H1 (cell line): ENCODE measurements at regions of chr1 and their contacts with region 1.

Region 1: DNA sequence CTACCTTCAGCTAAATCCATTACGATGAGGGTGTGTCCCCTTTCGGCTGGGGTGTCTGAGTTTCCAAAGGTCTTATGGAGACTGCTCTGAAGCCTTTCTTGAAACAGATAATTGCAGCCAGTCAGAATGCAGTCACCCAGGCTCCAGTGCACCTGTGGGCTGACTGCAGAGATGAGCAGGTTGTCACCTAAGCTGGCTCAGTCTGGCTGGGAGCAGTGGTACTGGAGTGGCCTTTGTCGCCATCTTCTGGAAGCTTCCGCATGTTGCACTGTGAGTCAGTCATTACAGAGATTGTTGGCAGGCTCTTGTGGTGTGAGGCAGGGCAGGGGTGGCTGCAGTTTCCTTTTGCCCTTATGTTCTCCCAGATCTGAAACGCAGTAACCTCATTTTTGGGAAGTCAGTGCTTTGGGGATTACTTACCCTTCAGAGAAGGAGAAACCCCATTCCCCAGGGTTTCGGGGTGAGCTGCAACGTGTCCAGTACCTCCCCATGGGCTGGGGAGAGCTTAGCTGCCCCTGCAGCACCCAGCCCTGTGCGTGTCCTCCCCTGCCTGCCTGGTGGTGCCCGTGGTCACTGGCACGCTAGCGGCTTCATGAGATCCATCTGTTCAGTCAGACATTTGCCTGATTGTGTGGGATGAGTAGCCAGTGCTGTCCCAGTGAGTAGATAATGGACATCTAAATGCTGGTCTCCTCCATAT is 48.0 kb downstream of the SMYD2 start:
- DNase-seq: peak; percentile 75 to 87
- H3K4me3 ChIP-seq: no peak overlapping the region
- H3K27ac ChIP-seq: no peak overlapping the region
- H3K4me1 ChIP-seq: no peaks in the 10 kb centered on the region; a peak in 2 of 7 replicates
- H3K27me3 ChIP-seq: no peaks in the 10 kb centered on the region
- CTCF ChIP-seq: peak; percentile 91 to 97 (median 96)
- EP300 ChIP-seq: peak in 1 of 2 experiments; percentile 8; a peak in 1 of 3 replicates
- POLR2A ChIP-seq: no peak
- RAD21 ChIP-seq: peak; percentile 100

Region 2: GRCh38 chr1:214076708-214077065 is 252.2 kb before region 1 on chr1:
- CTCF ChIA-PET with region 1: no interaction called
- POLR2A ChIA-PET with region 1: no interaction called
- DNase-seq: no peak
- H3K4me3 ChIP-seq: no peak overlapping the region
- H3K27ac ChIP-seq: no peak overlapping the region
- H3K4me1 ChIP-seq: peaks cover 0 to 9% (median 0%) of the 10 kb centered on the region in 4 experiments; a peak in 2 of 7 replicates
- H3K27me3 ChIP-seq: no peaks in the 10 kb centered on the region
- CTCF ChIP-seq: no peak
- EP300 ChIP-seq: no peak
- POLR2A ChIP-seq: no peak
- RAD21 ChIP-seq: no peak

Region 3: GRCh38 chr1:214234635-214235025 is 94.3 kb before region 1 on chr1:
- CTCF ChIA-PET with region 1: interaction called, 105 read pairs
- POLR2A ChIA-PET with region 1: no interaction called
- DNase-seq: no peak
- H3K4me3 ChIP-seq: no peak overlapping the region
- H3K27ac ChIP-seq: no peak overlapping the region
- H3K4me1 ChIP-seq: no peaks in the 10 kb centered on the region
- H3K27me3 ChIP-seq: peaks cover 0 to 1% (median 0%) of the 10 kb centered on the region in 4 experiments; a peak in 1 of 7 replicates
- CTCF ChIP-seq: no peak
- EP300 ChIP-seq: no peak
- POLR2A ChIP-seq: no peak
- RAD21 ChIP-seq: no peak

Region 4: DNA sequence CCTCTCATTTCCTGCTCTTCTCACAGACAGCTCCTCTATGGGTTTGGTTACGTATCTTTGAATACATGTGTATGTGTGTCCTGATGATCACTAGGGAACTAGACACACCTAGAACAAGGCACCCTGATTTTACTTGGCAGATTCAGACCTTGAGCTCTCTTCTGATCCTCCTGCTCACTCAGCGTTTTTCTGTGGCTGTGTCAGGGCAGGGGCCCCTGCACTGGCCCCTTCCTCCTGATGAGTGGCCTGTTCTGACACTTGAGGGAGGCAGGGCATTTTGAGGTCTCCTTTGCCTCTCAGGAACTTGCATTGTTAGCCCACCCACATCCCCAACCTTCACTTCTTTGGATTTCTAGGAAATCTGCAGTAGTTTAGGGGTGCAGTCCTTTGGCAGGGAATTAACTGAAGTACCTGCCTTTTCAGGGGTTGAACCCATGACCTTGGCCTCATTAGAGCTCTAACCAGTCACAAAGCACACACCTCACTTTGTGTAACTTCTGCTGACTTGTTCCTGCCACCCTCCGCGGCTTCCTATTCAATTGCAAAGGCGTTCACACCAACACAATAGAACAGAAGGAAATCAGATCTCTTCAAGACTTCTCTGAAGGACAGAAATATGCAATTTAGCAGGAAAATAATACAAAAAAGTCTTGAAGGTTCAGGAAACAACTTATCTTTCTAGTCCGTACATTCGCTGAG is 39.2 kb before region 1 on chr1:
- CTCF ChIA-PET with region 1: interaction called, 52 read pairs
- POLR2A ChIA-PET with region 1: no interaction called
- DNase-seq: peak; percentile 54 to 63
- H3K4me3 ChIP-seq: peak overlapping the region in 2 of 4 experiments; percentile 11 to 50; a peak in 4 of 8 replicates
- H3K27ac ChIP-seq: no peak overlapping the region
- H3K4me1 ChIP-seq: peaks cover 6 to 10% (median 7%) of the 10 kb centered on the region in 4 experiments
- H3K27me3 ChIP-seq: peaks cover 13 to 50% (median 42%) of the 10 kb centered on the region in 4 experiments
- CTCF ChIP-seq: no peak
- EP300 ChIP-seq: no peak
- POLR2A ChIP-seq: no peak
- RAD21 ChIP-seq: no peak

Region 5: DNA sequence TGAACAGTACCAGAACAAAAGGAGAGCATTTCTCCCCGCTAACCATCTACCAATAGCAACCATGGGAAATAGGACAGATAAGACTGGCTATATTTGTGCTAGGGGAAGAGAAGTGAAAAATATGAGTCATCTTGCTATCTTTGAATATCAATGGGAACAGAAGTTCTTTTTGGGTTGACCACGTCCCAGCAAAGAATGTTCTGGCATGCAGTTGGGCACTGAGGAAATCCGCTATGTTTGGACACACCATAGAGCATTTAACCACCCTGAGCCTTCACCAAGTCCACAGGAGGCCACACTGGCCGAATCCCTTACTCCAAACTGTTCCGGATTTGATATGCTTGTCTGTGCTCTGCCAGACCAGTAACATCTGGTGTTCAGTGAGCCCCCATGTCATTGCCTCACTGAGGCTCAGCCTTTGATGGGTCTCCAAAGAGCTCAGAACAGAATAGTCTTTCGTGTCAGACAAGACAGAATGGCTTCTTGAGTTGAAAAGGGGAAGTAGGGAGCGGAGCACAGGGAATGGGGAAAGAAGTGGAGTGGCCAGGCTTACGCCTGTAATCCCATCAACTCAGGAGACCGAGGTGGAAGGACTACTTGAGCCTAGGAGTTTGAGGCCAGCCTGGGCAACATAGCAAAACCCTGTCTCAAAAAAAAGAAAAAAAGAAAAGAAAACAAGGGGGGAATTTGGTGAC is 33.4 kb after region 1 on chr1:
- CTCF ChIA-PET with region 1: interaction called, 124 read pairs
- POLR2A ChIA-PET with region 1: no interaction called
- DNase-seq: no peak
- H3K4me3 ChIP-seq: no peak overlapping the region
- H3K27ac ChIP-seq: no peak overlapping the region
- H3K4me1 ChIP-seq: no peaks in the 10 kb centered on the region
- H3K27me3 ChIP-seq: no peaks in the 10 kb centered on the region
- CTCF ChIP-seq: no peak
- EP300 ChIP-seq: no peak
- POLR2A ChIP-seq: no peak
- RAD21 ChIP-seq: no peak

Region 6: DNA sequence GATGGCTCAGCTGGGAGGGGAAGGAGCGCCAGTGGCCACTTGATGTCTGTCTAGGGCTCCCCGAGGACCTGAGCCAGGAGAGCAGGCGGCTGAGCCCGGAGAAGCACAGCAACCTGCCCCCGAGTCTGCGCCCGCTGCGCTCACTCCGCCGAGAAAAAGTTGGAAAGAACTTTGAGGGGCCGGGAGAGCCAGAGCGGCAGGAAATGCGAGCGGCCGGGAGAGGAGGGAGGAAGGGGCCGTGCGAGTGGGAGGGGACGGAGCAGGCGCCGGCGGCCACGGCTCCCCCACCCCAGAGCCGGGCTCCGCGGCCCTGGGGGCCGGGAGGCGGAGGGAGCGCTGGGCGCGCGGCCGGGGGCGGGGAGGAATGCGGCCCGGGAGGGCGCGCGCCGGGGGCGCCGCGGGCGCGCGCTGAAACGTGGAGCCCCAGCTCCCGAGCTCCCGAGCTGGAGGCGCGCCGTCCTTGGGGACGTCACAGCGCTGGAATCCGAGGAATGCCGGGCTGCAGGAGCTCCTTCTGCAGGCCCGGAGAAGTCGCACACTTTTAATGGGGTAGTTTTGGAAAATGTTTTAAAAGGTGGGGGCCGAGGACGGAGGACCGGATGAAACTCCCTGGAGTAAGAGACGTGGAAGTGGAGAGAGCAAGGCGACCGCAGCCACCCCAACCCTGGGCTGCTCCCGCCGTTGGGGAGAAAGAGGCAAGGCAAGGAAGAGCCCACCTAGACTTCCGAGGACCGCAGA is 222.7 kb after region 1 on chr1 and contains the start of gene PTPN14:
- CTCF ChIA-PET with region 1: interaction called, 11 read pairs
- POLR2A ChIA-PET with region 1: interaction called, 4 read pairs
- DNase-seq: peak; percentile 87 to 88
- H3K4me3 ChIP-seq: peak within 1 kb of the TSS; percentile 80 to 99 (median 92)
- H3K27ac ChIP-seq: peak within 1 kb of the TSS; percentile 99
- H3K4me1 ChIP-seq: peaks cover 5 to 18% (median 10%) of the 10 kb centered on the region in 4 experiments; a peak in 6 of 7 replicates
- H3K27me3 ChIP-seq: no peaks in the 10 kb centered on the region
- CTCF ChIP-seq: peak; percentile 29 to 38 (median 30); a peak in 3 of 4 replicates
- EP300 ChIP-seq: peak in 1 of 2 experiments; percentile 85; a peak in 1 of 3 replicates
- POLR2A ChIP-seq: peak; percentile 2 to 94; a peak in 2 of 3 replicates
- RAD21 ChIP-seq: peak in 1 of 2 experiments; percentile 30; a peak in 1 of 4 replicates
- total RNA-seq, gene PTPN14: 77.4 and 93.6 TPM in 2 replicates

Region 7: GRCh38 chr1:214632091-214632490 is 303.2 kb after region 1 on chr1:
- CTCF ChIA-PET with region 1: interaction called, 29 read pairs
- POLR2A ChIA-PET with region 1: no interaction called
- DNase-seq: no peak
- H3K4me3 ChIP-seq: no peak overlapping the region
- H3K27ac ChIP-seq: no peak overlapping the region
- H3K4me1 ChIP-seq: no peaks in the 10 kb centered on the region
- H3K27me3 ChIP-seq: no peaks in the 10 kb centered on the region
- CTCF ChIP-seq: no peak
- EP300 ChIP-seq: no peak
- POLR2A ChIP-seq: no peak
- RAD21 ChIP-seq: no peak